ENCODE measurements at regions of chr11 and their contacts with region 1.

Region 1: DNA sequence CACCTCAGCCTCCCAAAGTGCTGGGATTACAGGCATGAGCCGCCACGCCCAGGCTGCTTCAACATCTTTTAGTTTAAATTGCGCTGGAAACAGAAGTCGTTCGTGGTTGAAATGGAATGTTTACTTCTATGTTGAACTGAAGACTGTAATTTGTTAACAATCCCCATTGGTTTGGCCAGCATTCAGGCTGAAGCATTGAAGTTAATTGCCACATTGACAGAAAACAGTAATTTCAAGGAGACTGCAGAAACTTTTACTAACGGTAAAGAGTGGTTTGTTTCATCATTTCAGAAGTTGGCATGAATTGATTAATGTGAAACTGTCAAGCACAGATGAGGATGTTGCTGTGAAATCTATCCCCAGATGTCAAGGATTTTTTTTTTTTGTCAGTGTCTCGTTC is 14.2 kb downstream of the AP5B1 start:
- DNase-seq: peak; percentile 9
- ATAC-seq: no peak
- H3K4me3 Mint-ChIP-seq: no peak overlapping the region
- H3K27ac Mint-ChIP-seq: no peak overlapping the region
- H3K4me1 Mint-ChIP-seq: peaks cover 6% of the 10 kb centered on the region
- H3K27me3 Mint-ChIP-seq: peaks cover 1% of the 10 kb centered on the region

Region 2: DNA sequence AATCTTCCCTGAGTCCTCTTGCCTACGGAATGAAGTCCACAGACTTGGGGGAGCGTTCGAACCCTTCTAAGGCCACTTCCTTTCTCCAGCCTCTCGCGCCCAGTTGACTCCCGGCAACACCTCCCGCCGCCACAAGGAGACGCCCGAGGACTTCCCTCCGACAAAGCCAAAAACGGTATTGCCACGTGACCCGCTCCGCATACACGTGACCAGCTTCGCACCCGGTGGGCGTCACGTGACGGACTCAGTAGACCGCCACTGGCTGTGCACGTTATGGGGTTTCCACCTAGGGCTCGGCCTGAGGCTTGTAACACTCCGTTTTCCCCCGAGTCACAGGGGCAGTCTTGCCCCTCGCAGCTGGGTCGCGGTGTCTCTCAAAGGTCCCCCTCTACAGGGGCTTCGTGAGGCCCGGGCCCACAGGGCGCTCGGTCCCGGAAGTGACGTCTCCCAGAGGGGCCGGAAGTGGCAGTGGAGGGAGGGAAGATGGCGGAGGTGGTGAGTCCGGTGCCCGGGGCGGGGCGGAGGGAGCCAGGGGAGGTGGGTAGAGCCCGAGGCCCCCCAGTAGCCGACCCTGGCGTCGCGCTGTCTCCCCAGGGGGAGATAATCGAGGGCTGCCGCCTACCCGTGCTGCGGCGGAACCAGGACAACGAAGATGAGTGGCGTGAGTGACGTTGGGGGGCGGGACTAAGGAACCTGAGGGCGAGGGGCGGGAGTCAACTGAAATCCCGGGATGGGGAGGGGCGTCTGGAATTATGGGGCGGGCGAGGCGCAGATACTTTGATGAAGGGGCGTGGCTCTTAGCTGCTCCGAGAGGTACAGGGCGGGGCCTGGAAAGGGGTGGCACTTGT is 54.5 kb before region 1 on chr11 and contains the start of gene KAT5:
- CTCF ChIA-PET with region 1: interaction called, 30 read pairs
- POLR2A ChIA-PET with region 1: interaction called, 10 read pairs
- DNase-seq: peak; percentile 99
- ATAC-seq: peak; percentile 86
- H3K4me3 Mint-ChIP-seq: peak within 1 kb of the TSS; percentile 85
- H3K27ac Mint-ChIP-seq: peak within 1 kb of the TSS; percentile 99
- H3K4me1 Mint-ChIP-seq: peaks cover 30% of the 10 kb centered on the region
- H3K27me3 Mint-ChIP-seq: no peaks in the 10 kb centered on the region
- total RNA-seq, gene KAT5: 63.2 to 68.7 TPM

Region 3: GRCh38 chr11:65720237-65720934 is 46.1 kb before region 1 on chr11 and contains the start of gene RNASEH2C:
- CTCF ChIA-PET with region 1: interaction called, 15 read pairs
- POLR2A ChIA-PET with region 1: no interaction called
- DNase-seq: peak; percentile 87
- ATAC-seq: peak; percentile 92
- H3K4me3 Mint-ChIP-seq: peak within 1 kb of the TSS; percentile 95
- H3K27ac Mint-ChIP-seq: peak within 1 kb of the TSS; percentile 89
- H3K4me1 Mint-ChIP-seq: peaks cover 36% of the 10 kb centered on the region
- H3K27me3 Mint-ChIP-seq: peaks cover 2% of the 10 kb centered on the region
- total RNA-seq, gene RNASEH2C: 88.0 to 92.3 TPM

Region 4: GRCh38 chr11:65786001-65786785 is 19.7 kb after region 1 on chr11:
- CTCF ChIA-PET with region 1: interaction called, 11 read pairs
- POLR2A ChIA-PET with region 1: no interaction called
- DNase-seq: no peak
- ATAC-seq: no peak
- H3K4me3 Mint-ChIP-seq: no peak overlapping the region
- H3K27ac Mint-ChIP-seq: no peak overlapping the region
- H3K4me1 Mint-ChIP-seq: peaks cover 36% of the 10 kb centered on the region
- H3K27me3 Mint-ChIP-seq: peaks cover 49% of the 10 kb centered on the region

Measured in activated CD8-positive, alpha-beta T cell treated with anti-CD3 and anti-CD28 coated beads, Interleukin-2, amount 10 ng/mL, durations not matched to agents 7 days and 5 days (primary cell).